ENCODE measurements at regions of chr4 and their contacts with region 1.

Region 1: DNA sequence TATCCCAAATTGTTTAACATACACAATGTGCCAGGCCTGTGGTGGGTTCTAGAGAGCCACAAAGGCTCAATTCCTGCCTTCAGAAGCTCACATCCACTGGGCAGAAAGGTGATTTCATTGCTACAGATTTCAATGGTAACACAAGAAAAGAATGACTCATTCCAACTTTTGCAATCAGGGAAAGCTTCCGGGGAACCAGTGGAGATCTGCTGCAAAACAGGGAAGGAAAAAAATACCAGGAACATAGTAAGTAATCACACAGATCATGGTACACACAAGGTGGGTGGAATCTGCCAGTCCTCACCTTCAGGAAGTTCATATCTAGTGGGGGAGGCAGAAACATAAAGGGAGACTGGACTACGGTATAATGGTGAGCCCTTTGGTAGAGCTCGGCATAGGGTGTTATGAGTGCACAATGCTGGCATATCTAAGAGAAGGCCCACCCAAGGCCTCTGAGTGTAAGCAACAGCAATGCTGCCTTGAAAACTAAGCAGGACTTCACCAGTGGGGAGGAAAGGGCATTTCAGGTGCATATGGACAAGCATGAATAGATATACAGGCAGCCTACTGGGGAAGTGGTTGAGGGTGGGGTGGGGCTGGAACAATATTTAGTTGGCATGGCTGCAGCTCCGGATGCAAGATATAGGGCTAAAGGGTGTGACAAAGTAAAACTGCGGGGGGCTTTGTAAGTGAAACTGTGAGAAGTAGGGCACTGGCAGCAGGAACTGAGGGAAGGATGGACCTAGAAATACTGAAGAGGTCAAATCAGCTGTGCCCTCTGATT is 24.2 kb downstream of the GPRIN3 start:
- DNase-seq: no peak
- H3K4me3 Mint-ChIP-seq: peak overlapping the region; percentile 34
- H3K27ac Mint-ChIP-seq: peak overlapping the region; percentile 83
- H3K4me1 Mint-ChIP-seq: peaks cover 71% of the 10 kb centered on the region
- H3K27me3 Mint-ChIP-seq: no peaks in the 10 kb centered on the region

Region 2: GRCh38 chr4:89270792-89271191 is 12.6 kb before region 1 on chr4:
- intact Hi-C with region 1: loop called (anchors 2 kb)
- DNase-seq: no peak
- H3K4me3 Mint-ChIP-seq: no peak overlapping the region
- H3K27ac Mint-ChIP-seq: peak overlapping the region; percentile 55
- H3K4me1 Mint-ChIP-seq: peaks cover 82% of the 10 kb centered on the region
- H3K27me3 Mint-ChIP-seq: no peaks in the 10 kb centered on the region

Region 3: DNA sequence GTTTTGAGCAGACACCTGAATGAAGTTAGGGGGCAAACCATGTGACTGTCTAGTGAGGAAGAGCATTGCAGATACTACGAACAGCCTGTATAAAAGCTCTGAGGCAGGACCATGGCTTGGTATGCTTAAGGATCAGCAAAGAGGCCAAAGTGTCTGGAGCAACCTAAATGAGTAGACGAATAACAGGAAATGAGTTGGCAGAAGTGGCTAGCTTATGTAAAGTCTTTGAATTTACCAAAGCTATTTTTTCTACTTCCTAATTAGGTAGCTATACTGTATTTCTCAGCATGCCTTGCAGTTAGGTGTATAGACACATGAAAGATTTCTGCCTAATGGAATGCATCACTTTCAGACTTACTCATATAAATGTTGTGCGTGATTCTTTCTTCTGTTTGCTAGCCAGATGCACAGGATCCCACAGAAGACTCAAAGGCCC is 33.5 kb after region 1 on chr4:
- intact Hi-C with region 1: loop called (anchors 5 kb)
- DNase-seq: no peak
- H3K4me3 Mint-ChIP-seq: peak overlapping the region; percentile 64
- H3K27ac Mint-ChIP-seq: peak overlapping the region; percentile 84
- H3K4me1 Mint-ChIP-seq: peaks cover 38% of the 10 kb centered on the region
- H3K27me3 Mint-ChIP-seq: no peaks in the 10 kb centered on the region

Region 4: DNA sequence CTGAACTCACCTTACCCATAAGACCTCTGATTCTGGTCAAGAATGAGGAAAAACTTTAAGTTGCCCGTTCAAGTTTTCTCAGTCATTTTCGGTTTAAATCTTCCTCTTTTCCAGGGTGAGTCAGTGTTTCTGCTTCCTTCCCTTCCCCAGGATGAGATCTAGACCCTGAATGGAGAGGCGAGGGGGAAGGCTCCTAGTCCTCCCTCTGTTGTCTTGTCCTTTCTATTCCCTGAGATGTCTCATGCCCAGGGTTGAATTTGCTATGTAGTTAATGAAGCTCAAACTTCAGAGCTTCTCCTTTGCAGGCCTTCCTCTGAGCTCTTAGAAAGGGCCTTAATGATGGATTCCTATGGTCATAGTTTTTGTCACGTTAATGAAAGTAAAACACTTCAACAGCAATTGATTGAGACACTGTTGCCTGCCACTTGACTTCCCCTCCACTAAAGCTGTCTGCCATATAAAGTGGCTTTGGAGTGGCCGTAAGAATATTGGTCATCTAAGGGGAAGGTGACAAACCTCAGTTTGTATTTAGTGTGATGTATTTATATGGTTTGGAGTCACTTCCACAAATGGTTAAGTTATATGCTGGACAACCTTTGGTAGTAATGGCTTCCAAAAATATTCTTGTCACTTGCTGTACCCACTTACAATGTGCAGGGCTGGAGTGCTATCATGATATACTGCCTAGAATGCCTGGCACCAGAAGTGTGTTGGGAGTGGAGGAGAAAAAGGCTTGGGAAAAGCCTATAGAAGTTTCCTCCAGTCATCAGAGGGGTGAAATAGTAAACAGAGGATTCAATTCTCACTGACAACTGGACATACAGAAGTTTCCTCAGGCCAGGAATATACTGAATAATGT is 48.5 kb after region 1 on chr4:
- intact Hi-C with region 1: no loop called
- DNase-seq: no peak
- H3K4me3 Mint-ChIP-seq: no peak overlapping the region
- H3K27ac Mint-ChIP-seq: no peak overlapping the region
- H3K4me1 Mint-ChIP-seq: peaks cover 17% of the 10 kb centered on the region
- H3K27me3 Mint-ChIP-seq: no peaks in the 10 kb centered on the region